ENCODE measurements at regions of chr11 and their contacts with region 1.

Region 1: GRCh38 chr11:58513747-58514367 is 6.0 kb upstream of the OR5B21 start:
- DNase-seq: peak; percentile 41
- H3K4me3 ChIP-seq: no peak overlapping the region
- H3K27ac ChIP-seq: no peak overlapping the region
- H3K4me1 ChIP-seq: no peaks in the 10 kb centered on the region
- CTCF ChIP-seq: peak; percentile 74

Region 2: GRCh38 chr11:57815476-57815875 is 698.4 kb before region 1 on chr11:
- CTCF ChIA-PET with region 1: no interaction called
- POLR2A ChIA-PET with region 1: no interaction called
- intact Hi-C with region 1: loop called (anchors 10 kb)
- DNase-seq: no peak
- H3K4me3 ChIP-seq: no peak overlapping the region
- H3K27ac ChIP-seq: no peak overlapping the region
- H3K4me1 ChIP-seq: no peaks in the 10 kb centered on the region
- CTCF ChIP-seq: no peak

Region 3: GRCh38 chr11:58286249-58286648 is 227.6 kb before region 1 on chr11:
- CTCF ChIA-PET with region 1: no interaction called
- POLR2A ChIA-PET with region 1: no interaction called
- intact Hi-C with region 1: loop called (anchors 10 kb)
- DNase-seq: peak; percentile 39
- H3K4me3 ChIP-seq: no peak overlapping the region
- H3K27ac ChIP-seq: no peak overlapping the region
- H3K4me1 ChIP-seq: no peaks in the 10 kb centered on the region
- CTCF ChIP-seq: peak; percentile 76

Region 4: GRCh38 chr11:58567889-58568512 is 54.1 kb after region 1 on chr11:
- CTCF ChIA-PET with region 1: no interaction called
- POLR2A ChIA-PET with region 1: no interaction called
- intact Hi-C with region 1: no loop called
- DNase-seq: peak; percentile 82
- H3K4me3 ChIP-seq: no peak overlapping the region
- H3K27ac ChIP-seq: peak overlapping the region; percentile 26
- H3K4me1 ChIP-seq: peaks cover 45% of the 10 kb centered on the region
- CTCF ChIP-seq: peak; percentile 93

Measured in OCI-LY7 (cell line).